HCT116 (cell line): ENCODE measurements at regions of chr5 and their contacts with region 1.

Region 1: GRCh38 chr5:54310433-54311175 is at the start of gene ARL15:
- DNase-seq: peak; percentile 88
- ATAC-seq: peak; percentile 88
- H3K4me3 ChIP-seq: peak within 1 kb of the TSS; percentile 61 to 85
- H3K27ac ChIP-seq: peak within 1 kb of the TSS; percentile 50
- H3K4me1 ChIP-seq: peaks cover 9 to 19% of the 10 kb centered on the region in 2 experiments; a peak in 2 of 4 replicates
- H3K27me3 ChIP-seq: no peaks in the 10 kb centered on the region
- CTCF ChIP-seq: no peak
- POLR2A ChIP-seq: peak; percentile 98
- RAD21 ChIP-seq: no peak
- total RNA-seq, gene ARL15: 15.0 TPM

Region 2: DNA sequence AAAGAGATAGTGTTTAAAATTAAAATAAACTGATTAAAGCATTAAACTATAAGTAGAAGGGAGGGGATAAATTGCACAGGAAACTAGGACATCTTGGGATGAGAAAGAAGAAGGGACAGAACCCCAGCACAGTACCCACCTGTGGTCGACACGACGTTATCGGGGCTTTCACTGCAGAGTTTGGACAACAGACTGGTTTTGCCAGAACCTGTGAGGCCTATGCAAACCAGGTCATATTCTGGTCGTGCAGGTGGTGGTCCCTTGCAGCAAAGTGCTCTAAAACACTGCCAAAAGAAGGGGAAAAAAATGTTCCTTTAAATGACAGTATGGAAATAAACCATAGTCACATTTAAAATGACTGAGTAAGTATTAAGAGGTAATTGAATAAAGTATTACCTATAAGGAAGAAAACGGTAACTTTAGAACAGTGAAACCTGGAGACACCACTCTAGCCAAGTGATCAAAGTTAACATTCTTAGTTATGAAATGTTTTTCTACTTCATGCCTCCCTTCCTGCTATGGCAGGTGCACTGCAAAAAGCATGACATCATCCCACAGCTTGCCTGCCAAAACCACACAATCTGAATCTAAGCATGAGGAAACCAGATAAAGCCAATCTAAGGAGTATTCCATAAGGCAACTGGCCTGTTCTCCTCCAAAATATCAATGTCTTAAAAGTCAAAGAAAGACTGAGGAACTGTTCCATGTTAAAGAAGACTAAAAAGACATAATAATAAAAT is 138.8 kb before region 1 on chr5:
- CTCF ChIA-PET with region 1: no interaction called
- POLR2A ChIA-PET with region 1: no interaction called
- RAD21 ChIA-PET with region 1: no interaction called
- intact Hi-C with region 1: no loop called
- DNase-seq: no peak
- ATAC-seq: no peak
- H3K4me3 ChIP-seq: no peak overlapping the region
- H3K27ac ChIP-seq: no peak overlapping the region
- H3K4me1 ChIP-seq: no peaks in the 10 kb centered on the region
- H3K27me3 ChIP-seq: no peaks in the 10 kb centered on the region
- CTCF ChIP-seq: no peak
- POLR2A ChIP-seq: no peak
- RAD21 ChIP-seq: no peak

Region 3: DNA sequence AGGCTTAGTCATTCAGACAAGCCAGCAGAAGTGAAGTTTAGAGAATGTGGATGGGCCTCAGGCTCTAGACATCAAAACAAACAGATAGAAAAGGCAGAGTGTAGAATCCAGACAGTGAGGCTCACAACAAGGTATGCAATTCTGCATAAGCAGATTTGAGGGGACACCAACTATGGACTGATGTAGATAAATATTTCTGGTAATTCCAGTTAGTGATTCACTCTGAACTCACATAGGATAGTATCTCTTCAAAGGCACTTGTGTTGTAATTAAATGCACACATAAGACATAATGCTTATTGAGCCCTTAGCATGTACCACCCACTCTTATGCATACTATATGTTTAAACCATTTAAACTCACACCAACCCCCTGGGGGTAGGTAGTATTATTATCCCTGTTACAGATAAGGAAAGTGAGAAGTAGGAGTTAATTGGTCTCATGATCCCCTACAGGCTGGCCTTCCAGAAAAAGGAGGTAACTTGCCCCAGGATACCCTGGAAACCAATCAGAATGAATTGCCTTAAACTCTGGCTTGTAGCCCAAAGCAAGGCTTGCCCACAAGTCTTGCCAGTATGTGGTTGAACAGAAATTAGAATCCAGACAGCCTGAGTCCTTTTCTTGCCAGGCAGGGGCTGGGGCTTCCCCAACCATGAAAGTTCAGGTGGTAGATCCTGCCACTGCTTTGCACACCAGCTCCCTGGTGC is 105.4 kb after region 1 on chr5:
- CTCF ChIA-PET with region 1: interaction called, 4 read pairs
- POLR2A ChIA-PET with region 1: interaction called, 3 read pairs
- RAD21 ChIA-PET with region 1: interaction called in 1 of 2 experiments, 5 read pairs
- intact Hi-C with region 1: loop called (anchors 10 kb)
- DNase-seq: no peak
- ATAC-seq: no peak; the same call in 1 of the 2 replicates
- H3K4me3 ChIP-seq: no peak overlapping the region
- H3K27ac ChIP-seq: no peak overlapping the region
- H3K4me1 ChIP-seq: peaks cover 0 to 5% of the 10 kb centered on the region in 2 experiments; a peak in 1 of 4 replicates
- H3K27me3 ChIP-seq: no peaks in the 10 kb centered on the region
- CTCF ChIP-seq: no peak
- POLR2A ChIP-seq: no peak
- RAD21 ChIP-seq: no peak